GM10248 (cell line): ENCODE measurements at regions of chr4 and their contacts with region 1.

Region 1: GRCh38 chr4:78911595-78911994 is 27.6 kb downstream of the PAQR3 start:
- DNase-seq: no peak
- CTCF ChIP-seq: no peak

Region 2: DNA sequence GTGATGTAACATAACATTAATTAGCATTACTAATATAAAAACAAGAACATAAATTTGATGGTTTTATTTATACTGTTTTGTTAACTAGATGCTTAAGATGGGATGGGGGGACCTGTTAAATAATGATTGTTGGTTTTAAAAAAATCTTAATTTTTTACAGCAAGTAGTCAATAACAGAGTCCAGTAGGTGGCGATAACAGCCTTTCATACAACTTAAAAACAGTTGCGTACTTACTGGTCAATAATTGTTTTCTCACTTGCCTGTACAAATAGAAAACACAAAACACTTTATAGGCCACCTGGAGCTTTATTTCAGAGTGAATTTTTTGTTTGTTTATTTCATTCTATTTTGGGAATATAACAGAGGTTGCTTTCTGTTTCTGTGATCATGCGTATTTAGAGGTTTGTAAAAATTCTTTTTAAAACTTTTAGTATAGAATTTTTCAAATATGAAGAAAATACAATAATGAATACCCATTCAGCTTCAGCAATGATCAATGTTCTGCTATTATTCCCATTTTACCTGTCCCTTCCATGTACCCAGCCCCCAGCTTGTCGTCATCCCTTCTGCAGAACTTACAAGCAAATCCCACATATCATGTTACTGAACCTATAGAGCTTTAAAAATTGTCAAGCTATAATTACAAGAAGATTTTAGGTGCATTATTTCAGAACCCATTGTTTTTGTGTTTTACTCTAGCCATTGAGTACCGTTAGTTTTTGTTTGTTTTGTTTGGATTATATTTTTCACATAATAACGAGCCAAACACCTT is 951.8 kb before region 1 on chr4:
- CTCF ChIA-PET with region 1: no interaction called
- POLR2A ChIA-PET with region 1: no interaction called
- DNase-seq: peak; percentile 31
- CTCF ChIP-seq: peak; percentile 57

Region 3: DNA sequence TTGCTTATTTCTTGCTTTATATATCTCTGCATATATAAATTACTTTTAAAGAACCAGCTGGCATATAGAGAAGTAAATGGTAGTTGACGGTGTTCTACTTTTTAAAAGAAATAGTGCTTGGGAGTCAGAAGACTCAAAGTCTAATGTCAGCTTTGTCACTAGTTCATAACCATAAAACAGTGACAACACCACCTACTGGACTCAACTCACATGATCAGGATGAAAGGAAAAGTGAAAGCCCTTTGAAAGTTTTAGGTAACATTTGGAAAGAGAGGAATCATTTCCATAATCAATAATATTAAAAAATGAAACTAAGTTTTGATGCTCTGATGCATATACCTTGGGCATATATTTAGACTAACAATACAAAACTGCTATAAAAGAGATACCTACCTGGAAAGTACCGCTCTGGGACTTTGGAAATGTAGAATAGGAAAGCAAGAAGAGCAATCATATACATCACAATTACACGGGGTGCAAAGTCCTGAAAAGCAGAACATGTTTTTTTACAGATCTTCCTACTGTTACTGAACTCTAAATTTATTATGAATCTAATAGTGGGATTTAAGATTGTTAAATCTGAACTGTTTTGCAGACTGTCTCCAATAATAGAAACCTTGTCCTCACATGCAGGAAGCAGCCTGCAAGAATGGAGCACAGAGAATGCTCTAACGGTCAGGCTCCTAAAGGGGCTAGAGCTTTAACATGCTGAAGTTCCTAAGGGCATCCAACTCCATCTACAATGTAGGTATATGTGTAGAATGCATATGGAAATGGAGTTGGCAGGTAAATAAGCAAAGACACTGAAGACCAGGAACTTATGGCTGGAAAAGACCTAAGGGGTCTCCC is 12.1 kb after region 1 on chr4:
- CTCF ChIA-PET with region 1: interaction called, 10 read pairs
- POLR2A ChIA-PET with region 1: no interaction called
- DNase-seq: no peak
- CTCF ChIP-seq: peak; percentile 24